Keratinocyte (primary cell): ENCODE measurements at regions of chr18 and their contacts with region 1.

Region 1: GRCh38 chr18:25990473-25990872 is 99.9 kb downstream of the SS18 start:
- DNase-seq: no peak
- H3K4me3 ChIP-seq: no peak overlapping the region
- H3K27ac ChIP-seq: no peak overlapping the region
- H3K4me1 ChIP-seq: no peaks in the 10 kb centered on the region
- H3K27me3 ChIP-seq: no peaks in the 10 kb centered on the region
- CTCF ChIP-seq: no peak

Region 2: DNA sequence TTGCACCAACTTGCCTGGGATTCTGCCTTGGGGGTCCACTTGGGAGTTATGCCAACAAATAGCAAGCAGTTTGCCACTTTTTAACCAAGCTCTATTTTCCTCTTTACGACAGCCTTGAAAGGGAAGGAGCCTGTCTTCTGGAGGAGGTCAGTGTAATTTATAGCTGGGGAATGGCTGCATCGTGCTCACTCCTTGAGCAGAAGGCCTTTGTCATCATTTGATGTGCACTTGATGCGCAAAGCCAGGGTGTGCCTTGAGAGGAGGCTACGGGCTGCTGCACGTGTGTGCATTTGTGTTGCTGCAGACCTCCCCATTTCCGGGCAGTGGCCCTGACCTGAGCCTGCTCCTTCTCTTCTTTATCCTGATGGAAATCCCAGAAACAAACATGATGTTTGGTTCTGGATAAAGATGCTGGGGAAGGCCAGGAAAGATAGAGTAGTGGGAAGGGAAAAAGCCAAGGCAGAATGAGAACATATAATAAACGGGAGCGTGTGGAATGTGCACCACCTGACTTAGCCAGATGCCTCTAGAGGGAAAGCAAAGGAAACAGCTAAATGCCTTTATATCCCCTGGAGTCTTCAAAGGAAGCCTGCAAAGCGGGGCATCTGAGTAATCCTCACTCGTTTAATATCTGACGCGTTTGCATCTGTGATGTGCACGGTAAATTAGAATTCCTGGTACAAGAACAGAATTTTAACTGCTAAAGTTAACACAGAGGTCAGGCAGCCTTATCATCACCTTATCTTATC is 570.2 kb before region 1 on chr18:
- dilution Hi-C with region 1: no loop called
- DNase-seq: no peak
- H3K4me3 ChIP-seq: no peak overlapping the region
- H3K27ac ChIP-seq: no peak overlapping the region
- H3K4me1 ChIP-seq: no peaks in the 10 kb centered on the region
- H3K27me3 ChIP-seq: no peaks in the 10 kb centered on the region
- CTCF ChIP-seq: no peak

Region 3: GRCh38 chr18:25953126-25953525 is 37.3 kb before region 1 on chr18:
- dilution Hi-C with region 1: loop called (anchors 5 kb)
- DNase-seq: no peak
- H3K4me3 ChIP-seq: no peak overlapping the region
- H3K27ac ChIP-seq: no peak overlapping the region
- H3K4me1 ChIP-seq: no peaks in the 10 kb centered on the region
- H3K27me3 ChIP-seq: no peaks in the 10 kb centered on the region
- CTCF ChIP-seq: no peak